ENCODE measurements at regions of chr6 and their contacts with region 1.

Region 1: DNA sequence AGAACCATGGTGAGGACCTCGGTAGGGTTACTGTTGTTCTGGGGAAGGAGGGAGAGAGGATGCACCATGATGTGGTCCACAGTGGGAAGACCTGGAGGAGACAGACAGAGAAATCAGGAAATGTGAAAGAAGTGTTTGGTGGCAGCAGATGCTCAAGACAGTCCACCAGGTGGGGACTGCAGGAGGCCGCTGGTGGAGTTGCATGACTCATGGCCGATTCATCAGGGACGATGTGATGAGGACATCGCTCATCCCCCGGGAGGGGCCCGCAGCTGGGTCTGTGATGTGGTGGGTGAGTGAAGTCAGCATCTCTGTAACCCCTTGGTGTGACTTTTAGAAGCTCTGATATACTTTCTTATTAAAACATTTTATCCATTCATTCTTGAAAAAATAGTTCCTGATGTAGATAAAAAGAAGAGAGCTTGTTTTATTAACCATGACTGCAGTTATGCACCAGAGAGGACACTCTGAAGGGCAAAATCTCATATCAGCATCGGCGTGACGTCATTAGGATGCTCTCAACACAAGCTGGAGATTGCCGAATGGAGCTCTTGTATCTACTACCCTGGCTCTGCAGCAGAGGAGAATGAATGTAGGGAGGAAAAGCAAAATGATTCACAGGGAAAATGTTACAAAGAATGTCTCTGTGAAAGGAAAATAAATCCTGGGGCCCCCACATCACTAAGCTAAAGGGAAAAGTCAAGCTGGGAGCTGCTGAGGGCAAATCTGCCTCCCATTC is 71.2 kb downstream of the RAMACL start:
- DNase-seq: peak; percentile 93
- ATAC-seq: peak; percentile 92
- H3K4me3 ChIP-seq: no peak overlapping the region
- H3K27ac ChIP-seq: no peak overlapping the region
- H3K4me1 ChIP-seq: peaks cover 10% of the 10 kb centered on the region
- H3K27me3 ChIP-seq: no peaks in the 10 kb centered on the region
- CTCF ChIP-seq: peak; percentile 67
- POLR2A ChIP-seq: no peak
- RAD21 ChIP-seq: peak; percentile 80

Region 2: GRCh38 chr6:166757232-166758135 is 242.2 kb after region 1 on chr6:
- CTCF ChIA-PET with region 1: no interaction called
- POLR2A ChIA-PET with region 1: no interaction called
- dilution Hi-C with region 1: no loop called
- in situ Hi-C with region 1: no loop called
- intact Hi-C with region 1: loop called (anchors 5 kb)
- DNase-seq: peak; percentile 59
- ATAC-seq: peak; percentile 74
- H3K4me3 ChIP-seq: 0 out of 2 replicates have a peak overlapping the region, but pooled peaks have one; percentile 16
- H3K27ac ChIP-seq: no peak overlapping the region
- H3K4me1 ChIP-seq: peaks cover 2% of the 10 kb centered on the region; the same call in 1 of the 2 replicates
- H3K27me3 ChIP-seq: peaks cover 32% of the 10 kb centered on the region
- CTCF ChIP-seq: no peak
- POLR2A ChIP-seq: no peak
- RAD21 ChIP-seq: no peak

Measured in IMR-90 (cell line).